ENCODE measurements at regions of chrX and their contacts with region 1.

Region 1: GRCh38 chrX:150587585-150588503 is 19.4 kb downstream of the MTM1 start:
- DNase-seq: peak; percentile 61
- H3K4me3 Mint-ChIP-seq: no peak overlapping the region
- H3K27ac Mint-ChIP-seq: no peak overlapping the region
- H3K4me1 Mint-ChIP-seq: no peaks in the 10 kb centered on the region
- H3K27me3 Mint-ChIP-seq: no peaks in the 10 kb centered on the region
- CTCF ChIP-seq: peak; percentile 44

Region 2: DNA sequence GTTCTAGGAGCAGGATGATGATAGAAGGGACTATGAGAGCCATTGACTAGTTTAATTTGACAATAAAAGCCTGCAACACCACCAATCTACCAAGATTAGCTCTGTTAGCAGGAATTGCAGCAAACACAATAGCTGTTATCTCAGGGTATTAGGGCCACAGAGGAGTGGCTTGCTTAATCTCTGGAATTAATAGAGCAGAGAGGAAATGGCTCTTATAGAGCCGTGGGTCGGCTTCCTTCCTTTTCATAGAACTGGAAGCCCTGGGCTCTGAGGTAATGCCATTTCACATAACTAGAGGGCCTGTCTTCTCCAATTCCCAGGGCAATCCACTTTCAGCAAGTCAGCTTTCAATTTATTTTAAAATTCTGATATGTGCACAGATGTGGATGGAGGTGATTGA is 141.7 kb before region 1 on chrX:
- CTCF ChIA-PET with region 1: no interaction called
- POLR2A ChIA-PET with region 1: no interaction called
- intact Hi-C with region 1: no loop called
- DNase-seq: no peak
- H3K4me3 Mint-ChIP-seq: no peak overlapping the region
- H3K27ac Mint-ChIP-seq: no peak overlapping the region
- H3K4me1 Mint-ChIP-seq: peaks cover 7% of the 10 kb centered on the region
- H3K27me3 Mint-ChIP-seq: peaks cover 15% of the 10 kb centered on the region
- CTCF ChIP-seq: no peak

Region 3: DNA sequence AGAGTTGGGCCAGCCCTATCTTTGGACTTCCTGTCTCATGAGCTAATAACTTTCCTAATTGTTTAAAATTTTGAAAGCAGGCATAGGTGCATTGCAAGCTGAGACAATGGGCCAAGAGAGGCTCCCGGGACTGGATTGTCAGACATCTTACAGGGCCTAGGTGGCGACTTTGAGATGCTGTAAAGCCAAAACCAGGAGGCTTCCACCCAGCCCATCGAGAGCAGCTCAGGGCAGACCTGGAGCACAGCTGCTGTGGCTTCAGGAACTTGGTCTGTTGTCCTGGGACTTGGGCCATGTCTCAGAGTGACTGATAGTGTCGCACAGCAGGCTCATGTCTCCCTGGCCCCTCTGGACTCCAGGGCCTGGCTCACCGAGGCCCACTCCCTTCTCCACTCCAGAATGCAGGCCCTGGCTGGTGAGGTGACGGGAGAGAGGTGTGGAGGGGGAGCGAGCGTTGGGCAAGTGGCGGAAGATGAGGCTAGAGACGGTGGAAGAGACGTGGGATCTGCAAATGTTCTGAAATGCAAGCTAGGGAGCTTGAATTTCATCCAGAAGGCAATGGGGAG is 43.5 kb before region 1 on chrX:
- CTCF ChIA-PET with region 1: no interaction called
- POLR2A ChIA-PET with region 1: no interaction called
- intact Hi-C with region 1: loop called (anchors 1 kb)
- DNase-seq: peak; percentile 45
- H3K4me3 Mint-ChIP-seq: no peak overlapping the region
- H3K27ac Mint-ChIP-seq: no peak overlapping the region
- H3K4me1 Mint-ChIP-seq: peaks cover 11% of the 10 kb centered on the region
- H3K27me3 Mint-ChIP-seq: peaks cover 2% of the 10 kb centered on the region
- CTCF ChIP-seq: no peak

Region 4: GRCh38 chrX:150635952-150636351 is 48.1 kb after region 1 on chrX:
- CTCF ChIA-PET with region 1: no interaction called
- POLR2A ChIA-PET with region 1: no interaction called
- intact Hi-C with region 1: no loop called
- DNase-seq: peak; percentile 35
- H3K4me3 Mint-ChIP-seq: no peak overlapping the region
- H3K27ac Mint-ChIP-seq: no peak overlapping the region
- H3K4me1 Mint-ChIP-seq: no peaks in the 10 kb centered on the region
- H3K27me3 Mint-ChIP-seq: peaks cover 11% of the 10 kb centered on the region
- CTCF ChIP-seq: no peak

Region 5: GRCh38 chrX:150863191-150863590 is 275.3 kb after region 1 on chrX:
- CTCF ChIA-PET with region 1: no interaction called
- POLR2A ChIA-PET with region 1: no interaction called
- intact Hi-C with region 1: no loop called
- DNase-seq: no peak
- H3K4me3 Mint-ChIP-seq: no peak overlapping the region
- H3K27ac Mint-ChIP-seq: no peak overlapping the region
- H3K4me1 Mint-ChIP-seq: peaks cover 7% of the 10 kb centered on the region
- H3K27me3 Mint-ChIP-seq: no peaks in the 10 kb centered on the region
- CTCF ChIP-seq: no peak

Region 6: DNA sequence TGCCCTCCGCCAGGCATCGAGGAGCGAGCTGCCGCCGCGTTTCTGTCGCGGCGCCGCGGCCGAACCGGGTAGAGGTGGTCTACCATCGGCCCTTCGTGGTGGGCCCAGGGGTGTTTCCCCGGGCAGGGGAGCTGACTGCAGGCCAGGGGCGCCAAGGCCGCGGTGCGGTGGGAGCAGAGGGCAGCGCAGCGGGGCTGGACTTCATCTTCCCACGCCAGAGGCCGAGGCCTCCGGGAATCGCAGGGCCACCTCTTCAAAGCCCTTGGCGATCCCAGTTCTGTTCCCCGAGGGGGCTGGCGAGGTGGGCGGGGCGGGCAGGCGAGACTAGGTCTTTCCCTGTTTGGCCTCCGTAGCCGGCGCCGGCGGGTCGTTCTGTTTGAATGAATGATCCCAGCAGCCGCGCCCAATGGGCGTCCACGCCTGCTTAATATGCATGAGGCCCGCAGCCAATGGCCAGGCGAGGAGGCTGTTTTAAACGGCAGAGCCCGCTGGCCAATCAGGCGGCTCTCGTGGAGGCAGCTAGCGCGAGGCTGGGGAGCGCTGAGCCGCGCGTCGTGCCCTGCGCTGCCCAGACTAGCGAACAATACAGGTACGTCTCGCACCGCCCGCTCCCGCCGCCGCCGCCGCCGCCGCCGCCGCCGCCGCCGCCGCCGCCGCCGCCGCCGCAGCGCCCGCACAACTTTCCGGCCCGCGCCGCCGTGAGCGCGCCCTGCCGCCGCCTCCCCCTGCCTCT is 395.1 kb after region 1 on chrX and contains the start of gene HMGB3:
- CTCF ChIA-PET with region 1: no interaction called
- POLR2A ChIA-PET with region 1: no interaction called
- intact Hi-C with region 1: no loop called
- DNase-seq: peak; percentile 93
- H3K4me3 Mint-ChIP-seq: peak within 1 kb of the TSS; percentile 54
- H3K27ac Mint-ChIP-seq: no peak within 1 kb of the TSS
- H3K4me1 Mint-ChIP-seq: peaks cover 12% of the 10 kb centered on the region
- H3K27me3 Mint-ChIP-seq: no peaks in the 10 kb centered on the region
- CTCF ChIP-seq: no peak
- total RNA-seq, gene HMGB3: 65.8 and 75.3 TPM in 2 replicates

Measured in MCF 10A (cell line).